Endothelial cell of umbilical vein (primary cell): ENCODE measurements at regions of chr1 and their contacts with region 1.

Region 1: DNA sequence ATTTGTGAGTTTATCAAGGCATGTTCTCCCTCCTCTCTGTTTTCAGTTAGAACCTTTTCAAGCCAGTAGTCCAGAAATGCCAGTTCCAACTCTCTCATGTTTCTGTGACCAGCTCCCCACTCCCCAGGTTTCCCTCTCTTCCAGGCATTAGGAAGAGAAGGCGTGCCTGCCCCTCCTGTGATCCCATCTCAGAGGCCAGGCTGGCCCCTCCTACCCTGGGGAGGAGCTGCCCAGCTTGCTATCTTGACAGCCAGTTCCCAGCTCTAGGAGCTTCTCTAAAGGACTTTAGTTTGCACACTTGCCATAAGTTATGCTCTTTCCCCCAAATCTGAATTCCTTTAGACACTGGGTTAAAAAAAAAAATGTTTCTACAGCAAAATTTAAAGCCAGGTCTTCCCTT is 8.9 kb downstream of the HYI start:
- DNase-seq: peak; percentile 47
- H3K4me3 ChIP-seq: no peak overlapping the region
- H3K27ac ChIP-seq: no peak overlapping the region
- H3K4me1 ChIP-seq: peaks cover 2% of the 10 kb centered on the region
- H3K27me3 ChIP-seq: no peaks in the 10 kb centered on the region
- CTCF ChIP-seq: no peak
- POLR2A ChIP-seq: no peak

Region 2: GRCh38 chr1:43481491-43481890 is 36.7 kb after region 1 on chr1:
- CTCF ChIA-PET with region 1: no interaction called
- POLR2A ChIA-PET with region 1: no interaction called
- dilution Hi-C with region 1: no loop called
- intact Hi-C with region 1: loop called (anchors 5 kb)
- DNase-seq: no peak
- H3K4me3 ChIP-seq: no peak overlapping the region
- H3K27ac ChIP-seq: no peak overlapping the region
- H3K4me1 ChIP-seq: peaks cover 13% of the 10 kb centered on the region
- H3K27me3 ChIP-seq: no peaks in the 10 kb centered on the region
- CTCF ChIP-seq: no peak
- POLR2A ChIP-seq: no peak